ENCODE measurements at regions of chr2 and their contacts with region 1.

Region 1: DNA sequence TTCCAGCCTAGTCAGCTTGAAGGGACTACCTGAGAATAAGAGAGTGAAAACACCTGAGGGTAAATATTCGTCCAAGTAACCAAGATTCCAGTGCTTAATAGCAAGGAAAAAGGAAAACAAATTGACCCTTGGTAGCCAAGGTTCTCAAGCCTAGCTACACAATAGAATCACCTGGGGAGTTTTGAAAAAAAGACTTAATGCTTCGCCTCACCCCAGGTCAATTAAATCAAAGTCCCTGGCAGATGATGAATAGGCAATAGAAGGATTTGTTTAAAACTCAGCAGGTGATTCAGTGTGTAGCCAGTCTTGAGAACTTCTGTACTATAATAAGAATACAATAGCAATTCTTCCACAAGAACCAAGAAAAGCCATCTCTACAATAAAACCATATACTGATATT is 500.2 kb downstream of the XIRP2 start:
- DNase-seq: no peak
- H3K4me3 ChIP-seq: no peak overlapping the region
- H3K27ac ChIP-seq: no peak overlapping the region
- H3K4me1 ChIP-seq: no peaks in the 10 kb centered on the region
- H3K27me3 ChIP-seq: no peaks in the 10 kb centered on the region
- CTCF ChIP-seq: no peak

Region 2: GRCh38 chr2:167335541-167335992 is 52.9 kb before region 1 on chr2:
- CTCF ChIA-PET with region 1: no interaction called
- dilution Hi-C with region 1: loop called (anchors 5 kb)
- in situ Hi-C with region 1: no loop called
- intact Hi-C with region 1: no loop called
- DNase-seq: peak; percentile 2
- H3K4me3 ChIP-seq: no peak overlapping the region
- H3K27ac ChIP-seq: no peak overlapping the region
- H3K4me1 ChIP-seq: no peaks in the 10 kb centered on the region
- H3K27me3 ChIP-seq: peaks cover 2% of the 10 kb centered on the region
- CTCF ChIP-seq: no peak

Measured in mammary epithelial cell (primary cell).